Caco-2 (cell line): ENCODE measurements at regions of chr3 and their contacts with region 1.

Region 1: DNA sequence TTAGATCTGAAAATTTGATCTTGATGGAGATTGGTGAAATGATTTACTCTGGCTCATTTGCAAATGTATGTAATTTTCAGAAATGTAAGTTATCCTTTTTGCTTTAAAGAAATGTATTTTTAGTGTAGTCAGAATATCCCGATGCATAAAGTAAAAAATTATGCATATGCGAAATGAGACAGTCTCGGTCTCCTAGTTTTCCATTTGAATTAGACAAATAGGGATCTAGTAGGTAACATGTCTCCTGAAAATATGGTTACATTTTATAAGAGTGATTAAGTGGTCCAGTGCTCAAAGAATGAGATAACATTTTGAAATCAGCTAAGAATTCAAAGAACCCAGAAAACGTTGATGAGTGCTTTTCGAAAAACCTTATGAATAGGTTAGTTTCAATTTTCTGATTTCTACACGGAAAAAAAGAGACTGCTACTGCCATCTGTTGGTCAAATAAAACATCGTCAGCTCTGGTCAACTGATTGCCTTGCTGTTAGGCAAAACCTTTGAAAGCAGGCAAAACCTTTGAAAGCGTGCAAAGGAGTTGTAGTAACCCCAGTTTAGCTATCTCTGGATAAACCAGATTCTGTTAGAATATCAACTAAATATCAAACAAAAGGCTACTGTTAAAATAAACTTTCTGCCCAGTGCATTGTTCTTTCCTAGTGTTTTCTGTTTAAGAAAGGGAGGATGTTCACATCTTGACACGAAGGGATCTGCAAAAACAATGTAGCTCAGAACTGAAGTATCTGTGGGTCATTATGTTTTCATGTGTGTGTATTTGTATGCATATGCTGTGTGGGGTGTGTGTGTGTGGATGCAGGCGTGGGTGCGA is 59.3 kb upstream of the CHMP2B start:
- DNase-seq: peak in 1 of 2 experiments; percentile 53
- H3K4me3 ChIP-seq: no peak overlapping the region
- H3K4me3 Mint-ChIP-seq: no peak overlapping the region
- H3K27ac Mint-ChIP-seq: no peak overlapping the region
- H3K4me1 ChIP-seq: peaks cover 8% of the 10 kb centered on the region; the same call in 1 of the 2 replicates
- H3K4me1 Mint-ChIP-seq: no peaks in the 10 kb centered on the region
- H3K27me3 ChIP-seq: no peaks in the 10 kb centered on the region
- H3K27me3 Mint-ChIP-seq: peaks cover 6% of the 10 kb centered on the region
- CTCF ChIP-seq: peak; percentile 41 to 48

Region 2: GRCh38 chr3:86702381-86702958 is 465.4 kb before region 1 on chr3:
- CTCF ChIA-PET with region 1: no interaction called
- POLR2A ChIA-PET with region 1: no interaction called
- intact Hi-C with region 1: loop called (anchors 5 kb)
- DNase-seq: no peak
- H3K4me3 ChIP-seq: no peak overlapping the region
- H3K4me3 Mint-ChIP-seq: no peak overlapping the region
- H3K27ac Mint-ChIP-seq: no peak overlapping the region
- H3K4me1 ChIP-seq: peaks cover 3% of the 10 kb centered on the region
- H3K4me1 Mint-ChIP-seq: peaks cover 13% of the 10 kb centered on the region
- H3K27me3 ChIP-seq: no peaks in the 10 kb centered on the region
- H3K27me3 Mint-ChIP-seq: no peaks in the 10 kb centered on the region
- CTCF ChIP-seq: peak; percentile 50 to 53

Region 3: DNA sequence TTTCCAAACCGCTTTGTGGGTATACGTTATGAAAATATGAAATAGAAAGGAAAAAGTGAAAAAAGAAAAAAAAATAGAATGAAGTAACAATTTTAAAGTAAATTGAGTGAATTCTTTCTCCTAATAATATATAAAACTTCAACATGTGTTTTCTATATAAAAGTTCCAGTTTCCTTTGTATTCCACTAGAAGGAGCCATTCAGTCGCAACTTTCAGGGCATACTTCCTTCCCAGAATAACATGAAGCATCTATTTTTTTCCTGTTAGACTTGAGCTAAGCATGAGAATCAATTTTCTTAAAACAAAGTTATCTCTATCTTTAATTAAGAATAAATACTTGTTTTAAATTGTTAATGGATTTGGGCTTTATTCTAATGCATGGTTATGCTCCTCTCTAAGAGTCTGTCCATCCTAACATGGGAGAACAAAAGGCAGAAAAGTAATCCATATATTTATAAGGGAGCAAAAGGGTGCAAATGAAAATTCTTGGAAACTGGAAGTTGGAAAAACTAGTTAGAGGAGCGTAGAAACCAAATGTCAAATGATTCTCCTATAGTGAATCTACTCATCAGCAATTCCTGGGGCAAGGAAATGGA is 160.9 kb before region 1 on chr3:
- CTCF ChIA-PET with region 1: no interaction called
- POLR2A ChIA-PET with region 1: no interaction called
- intact Hi-C with region 1: loop called (anchors 2 kb)
- DNase-seq: no peak
- H3K4me3 ChIP-seq: no peak overlapping the region
- H3K4me3 Mint-ChIP-seq: no peak overlapping the region
- H3K27ac Mint-ChIP-seq: no peak overlapping the region
- H3K4me1 ChIP-seq: no peaks in the 10 kb centered on the region
- H3K4me1 Mint-ChIP-seq: no peaks in the 10 kb centered on the region
- H3K27me3 ChIP-seq: no peaks in the 10 kb centered on the region
- H3K27me3 Mint-ChIP-seq: peaks cover 6% of the 10 kb centered on the region
- CTCF ChIP-seq: peak; percentile 18 to 47

Region 4: GRCh38 chr3:87127281-87127680 is 40.6 kb before region 1 on chr3:
- CTCF ChIA-PET with region 1: no interaction called
- POLR2A ChIA-PET with region 1: no interaction called
- intact Hi-C with region 1: no loop called
- DNase-seq: no peak
- H3K4me3 ChIP-seq: no peak overlapping the region
- H3K4me3 Mint-ChIP-seq: no peak overlapping the region
- H3K27ac Mint-ChIP-seq: no peak overlapping the region
- H3K4me1 ChIP-seq: no peaks in the 10 kb centered on the region
- H3K4me1 Mint-ChIP-seq: no peaks in the 10 kb centered on the region
- H3K27me3 ChIP-seq: no peaks in the 10 kb centered on the region
- H3K27me3 Mint-ChIP-seq: peaks cover 3% of the 10 kb centered on the region
- CTCF ChIP-seq: no peak